Esophagus muscularis mucosa (tissue), 4 donors: ENCODE measurements at regions of chr16 and their contacts with region 1.

Region 1: GRCh38 chr16:89241187-89242007 is 23.9 kb downstream of the ZNF778 start:
- DNase-seq: no peak
- H3K4me3 ChIP-seq: peak overlapping the region; percentile 78 to 84 (median 82)
- H3K27ac ChIP-seq: peak overlapping the region; percentile 94 to 97 (median 94)
- H3K4me1 ChIP-seq: peaks cover 4 to 20% (median 17%) of the 10 kb centered on the region in 4 donors
- H3K27me3 ChIP-seq: no peaks in the 10 kb centered on the region
- CTCF ChIP-seq: no peak
- EP300 ChIP-seq: no peak
- POLR2A ChIP-seq: peak; percentile 79

Region 2: GRCh38 chr16:89289428-89290395 is 48.3 kb after region 1 on chr16:
- intact Hi-C with region 1: loop called (anchors 10 kb)
- DNase-seq: no peak
- H3K4me3 ChIP-seq: no peak overlapping the region
- H3K27ac ChIP-seq: peak overlapping the region in 1 of 4 donors; percentile 4
- H3K4me1 ChIP-seq: peaks cover 14 to 35% (median 19%) of the 10 kb centered on the region in 4 donors
- H3K27me3 ChIP-seq: no peaks in the 10 kb centered on the region
- CTCF ChIP-seq: peak; percentile 65 to 87 (median 75)
- EP300 ChIP-seq: no peak
- POLR2A ChIP-seq: no peak

Region 3: GRCh38 chr16:89507834-89508590 is 266.6 kb after region 1 on chr16 and contains the start of gene SPG7:
- intact Hi-C with region 1: loop called (anchors 5 kb)
- DNase-seq: peak; percentile 95
- H3K4me3 ChIP-seq: peak within 1 kb of the TSS; percentile 80 to 97 (median 88)
- H3K27ac ChIP-seq: peak within 1 kb of the TSS; percentile 90 to 96 (median 95)
- H3K4me1 ChIP-seq: peaks cover 38 to 46% (median 44%) of the 10 kb centered on the region in 4 donors
- H3K27me3 ChIP-seq: no peaks in the 10 kb centered on the region
- CTCF ChIP-seq: no peak
- EP300 ChIP-seq: no peak
- POLR2A ChIP-seq: peak; percentile 83
- total RNA-seq, gene SPG7: 58.8 to 94.3 (median 83.3) TPM